ENCODE measurements at regions of chr10 and their contacts with region 1.

Region 1: GRCh38 chr10:93702211-93703001 is at the start of gene FRA10AC1:
- DNase-seq: peak; percentile 91
- H3K4me3 Mint-ChIP-seq: no peak within 1 kb of the TSS
- H3K27ac Mint-ChIP-seq: no peak within 1 kb of the TSS
- H3K4me1 Mint-ChIP-seq: peaks cover 15% of the 10 kb centered on the region
- H3K27me3 Mint-ChIP-seq: no peaks in the 10 kb centered on the region
- total RNA-seq, gene FRA10AC1: 24.5 to 25.0 TPM

Region 2: GRCh38 chr10:92689663-92690210 is 1012.7 kb before region 1 on chr10 and contains the start of gene HHEX:
- CTCF ChIA-PET with region 1: no interaction called
- intact Hi-C with region 1: loop called (anchors 5 kb)
- DNase-seq: no peak
- H3K4me3 Mint-ChIP-seq: peak within 1 kb of the TSS; percentile 58
- H3K27ac Mint-ChIP-seq: no peak within 1 kb of the TSS
- H3K4me1 Mint-ChIP-seq: peaks cover 19% of the 10 kb centered on the region
- H3K27me3 Mint-ChIP-seq: peaks cover 64% of the 10 kb centered on the region
- total RNA-seq, gene HHEX: 0.15 TPM in 1 of 2 experiments, not detected in the other

Region 3: GRCh38 chr10:93615576-93616235 is 86.7 kb before region 1 on chr10:
- CTCF ChIA-PET with region 1: no interaction called
- intact Hi-C with region 1: no loop called
- DNase-seq: no peak
- H3K4me3 Mint-ChIP-seq: no peak overlapping the region
- H3K27ac Mint-ChIP-seq: no peak overlapping the region
- H3K4me1 Mint-ChIP-seq: no peaks in the 10 kb centered on the region
- H3K27me3 Mint-ChIP-seq: no peaks in the 10 kb centered on the region

Region 4: GRCh38 chr10:93687737-93688136 is 14.7 kb before region 1 on chr10:
- CTCF ChIA-PET with region 1: no interaction called
- intact Hi-C with region 1: no loop called
- DNase-seq: no peak
- H3K4me3 Mint-ChIP-seq: no peak overlapping the region
- H3K27ac Mint-ChIP-seq: no peak overlapping the region
- H3K4me1 Mint-ChIP-seq: peaks cover 7% of the 10 kb centered on the region
- H3K27me3 Mint-ChIP-seq: no peaks in the 10 kb centered on the region

Region 5: DNA sequence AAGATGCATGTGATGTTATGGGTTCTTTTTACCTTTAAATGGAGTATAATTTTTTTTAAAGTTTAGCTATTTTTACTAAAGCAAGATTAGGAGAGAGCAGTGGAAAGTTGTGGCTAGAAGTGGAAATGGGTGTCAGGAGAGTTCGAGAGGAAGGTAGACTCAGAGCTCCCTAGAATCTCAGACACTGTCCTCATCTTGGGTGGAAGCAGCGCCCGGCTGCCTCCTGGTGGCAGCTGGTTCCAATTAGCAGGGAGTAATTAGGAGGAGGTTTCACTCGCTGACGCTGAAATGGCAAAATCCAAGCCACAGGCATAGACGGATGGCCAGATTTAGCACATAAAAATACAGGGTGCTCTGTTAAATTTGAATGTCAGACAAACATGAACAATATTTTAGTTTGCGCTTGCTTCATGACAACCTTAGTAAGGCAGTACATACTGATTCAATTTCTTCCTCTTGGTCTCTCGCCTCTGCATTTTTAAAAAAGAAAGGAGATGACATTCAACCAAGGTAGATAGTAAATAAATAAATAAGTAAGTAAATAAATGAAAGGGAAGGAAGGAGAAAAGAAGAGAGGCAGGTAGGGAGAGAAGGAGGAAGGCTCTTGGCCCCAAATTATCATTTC is 113.8 kb after region 1 on chr10:
- CTCF ChIA-PET with region 1: interaction called, 20 read pairs
- intact Hi-C with region 1: loop called (anchors 1 kb)
- DNase-seq: peak; percentile 66
- H3K4me3 Mint-ChIP-seq: no peak overlapping the region
- H3K27ac Mint-ChIP-seq: no peak overlapping the region
- H3K4me1 Mint-ChIP-seq: peaks cover 4% of the 10 kb centered on the region
- H3K27me3 Mint-ChIP-seq: peaks cover 31% of the 10 kb centered on the region

Region 6: DNA sequence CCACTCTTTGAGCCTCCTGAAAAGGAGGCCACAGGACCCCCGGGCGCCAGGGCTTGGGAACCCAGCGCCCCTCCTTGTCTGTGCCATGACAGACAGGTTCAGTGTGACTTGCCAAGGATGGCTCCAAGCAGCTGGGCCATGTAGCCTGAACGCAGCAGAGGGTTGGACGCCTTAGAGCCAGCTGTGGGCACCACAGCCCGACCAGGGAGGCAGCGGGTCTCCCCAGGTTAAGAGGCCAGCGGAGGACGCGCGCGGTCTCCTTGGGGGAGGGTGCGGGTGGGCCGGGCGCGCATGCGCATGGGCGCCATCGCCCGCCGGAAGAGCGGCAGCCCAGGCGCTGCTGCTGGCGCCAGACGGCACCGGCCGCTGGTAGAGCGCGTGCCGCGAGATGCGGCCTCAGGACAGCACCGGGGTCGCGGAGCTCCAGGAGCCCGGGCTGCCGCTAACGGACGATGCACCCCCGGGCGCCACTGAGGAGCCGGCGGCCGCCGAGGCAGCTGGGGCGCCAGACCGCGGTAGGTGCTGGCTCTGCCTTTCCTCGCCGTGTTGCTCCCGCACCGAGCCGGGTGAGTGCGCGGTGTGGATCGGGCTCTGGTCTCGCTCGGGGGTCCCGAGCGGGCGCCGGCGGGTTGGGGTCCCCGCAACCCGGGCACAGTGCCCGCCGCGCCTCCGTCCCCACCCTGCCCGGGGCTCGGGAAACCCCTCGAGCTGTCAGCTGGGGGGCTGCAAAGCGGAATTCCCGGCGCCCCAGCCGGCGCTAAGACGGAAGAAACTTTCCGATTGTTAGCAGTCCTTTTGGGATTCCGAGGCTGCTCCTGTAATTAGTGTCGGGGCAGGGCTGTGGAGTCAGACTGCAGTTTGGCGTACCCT is 191.5 kb after region 1 on chr10 and contains the start of gene SLC35G1:
- CTCF ChIA-PET with region 1: no interaction called
- intact Hi-C with region 1: loop called (anchors 1 kb)
- DNase-seq: peak; percentile 71
- H3K4me3 Mint-ChIP-seq: peak within 1 kb of the TSS; percentile 82
- H3K27ac Mint-ChIP-seq: peak within 1 kb of the TSS; percentile 37
- H3K4me1 Mint-ChIP-seq: peaks cover 37% of the 10 kb centered on the region
- H3K27me3 Mint-ChIP-seq: no peaks in the 10 kb centered on the region
- total RNA-seq, gene SLC35G1: 3.8 to 4.1 TPM

Region 7: GRCh38 chr10:94362360-94363250 is 660.2 kb after region 1 on chr10 and contains the start of gene NOC3L:
- CTCF ChIA-PET with region 1: no interaction called
- intact Hi-C with region 1: loop called (anchors 1 kb)
- DNase-seq: peak; percentile 96
- H3K4me3 Mint-ChIP-seq: peak within 1 kb of the TSS; percentile 83
- H3K27ac Mint-ChIP-seq: peak within 1 kb of the TSS; percentile 91
- H3K4me1 Mint-ChIP-seq: peaks cover 30% of the 10 kb centered on the region
- H3K27me3 Mint-ChIP-seq: no peaks in the 10 kb centered on the region
- total RNA-seq, gene NOC3L: 39.3 to 40.1 TPM

Region 8: DNA sequence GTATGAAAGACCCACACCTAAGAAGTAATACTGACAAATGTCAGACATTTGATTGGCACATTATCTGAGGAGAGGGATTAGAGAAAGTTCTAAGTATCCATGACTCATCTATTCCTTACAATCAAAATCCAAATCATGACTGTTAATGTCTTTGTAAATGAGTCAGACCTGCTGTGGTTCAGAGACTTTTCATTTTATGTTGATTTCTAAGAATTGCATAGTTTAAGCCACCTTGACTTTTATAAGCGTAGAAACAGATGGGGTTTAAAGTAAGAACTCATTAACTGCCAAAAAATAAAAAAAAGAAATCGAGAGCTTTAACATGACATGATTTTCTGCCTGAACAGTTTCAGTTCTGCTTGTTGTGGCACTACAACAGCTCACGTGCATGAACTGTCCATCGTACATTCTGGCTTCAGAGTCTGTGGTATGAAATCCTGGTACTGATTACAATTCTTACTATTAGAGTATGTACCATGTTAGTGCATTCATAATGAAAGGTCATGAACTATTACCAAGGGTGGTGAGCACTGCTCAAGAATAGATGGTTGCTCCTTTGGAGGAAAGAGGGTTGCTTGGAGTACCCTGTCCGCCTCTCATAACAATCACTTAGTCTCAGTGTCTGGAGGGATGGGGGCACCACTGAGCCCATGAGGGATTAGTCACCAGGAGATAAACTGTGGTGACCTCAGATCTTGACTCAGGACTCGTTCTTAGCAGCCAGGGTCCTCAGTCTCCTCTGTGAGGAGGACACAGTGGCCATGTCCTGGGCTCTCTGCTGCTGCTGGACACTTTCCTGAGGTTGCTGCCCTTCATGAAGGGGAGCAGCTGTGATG is 1533.9 kb after region 1 on chr10:
- CTCF ChIA-PET with region 1: no interaction called
- intact Hi-C with region 1: loop called (anchors 10 kb)
- DNase-seq: peak; percentile 26
- H3K4me3 Mint-ChIP-seq: no peak overlapping the region
- H3K27ac Mint-ChIP-seq: peak overlapping the region; percentile 75
- H3K4me1 Mint-ChIP-seq: peaks cover 19% of the 10 kb centered on the region
- H3K27me3 Mint-ChIP-seq: peaks cover 20% of the 10 kb centered on the region

Measured in activated naive CD4-positive, alpha-beta T cell treated with anti-CD3 and anti-CD28 coated beads for 36 hours (primary cell).